Posterior vena cava (tissue), 2 donors: ENCODE measurements at regions of chr1 and their contacts with region 1.

Region 1: GRCh38 chr1:64127297-64127696 is 76.1 kb upstream of the UBE2U start:
- DNase-seq: no peak

Region 2: GRCh38 chr1:64087768-64088167 is 39.5 kb before region 1 on chr1:
- intact Hi-C with region 1: loop called in 1 of 2 experiments (anchors 1 kb)
- DNase-seq: no peak

Region 3: DNA sequence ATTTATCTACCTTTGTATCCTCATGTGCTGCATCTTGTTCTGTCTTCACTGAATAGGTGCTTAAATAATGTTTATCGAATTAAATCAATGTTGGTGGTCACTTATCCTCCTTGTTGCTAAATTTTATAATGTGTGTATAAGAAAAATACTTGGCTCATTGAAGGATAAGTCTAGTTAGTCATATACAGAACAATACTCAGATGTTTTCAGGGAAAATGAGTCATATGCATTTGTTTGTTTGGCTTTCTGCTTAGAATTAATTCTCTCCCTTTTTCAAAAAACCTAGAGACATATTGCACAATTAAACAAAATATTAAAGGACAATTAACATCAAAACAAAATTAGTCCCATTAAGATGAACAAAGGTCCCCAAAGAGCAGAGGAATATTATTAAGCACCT is 165.1 kb after region 1 on chr1:
- intact Hi-C with region 1: no loop called
- DNase-seq: no peak

Region 4: DNA sequence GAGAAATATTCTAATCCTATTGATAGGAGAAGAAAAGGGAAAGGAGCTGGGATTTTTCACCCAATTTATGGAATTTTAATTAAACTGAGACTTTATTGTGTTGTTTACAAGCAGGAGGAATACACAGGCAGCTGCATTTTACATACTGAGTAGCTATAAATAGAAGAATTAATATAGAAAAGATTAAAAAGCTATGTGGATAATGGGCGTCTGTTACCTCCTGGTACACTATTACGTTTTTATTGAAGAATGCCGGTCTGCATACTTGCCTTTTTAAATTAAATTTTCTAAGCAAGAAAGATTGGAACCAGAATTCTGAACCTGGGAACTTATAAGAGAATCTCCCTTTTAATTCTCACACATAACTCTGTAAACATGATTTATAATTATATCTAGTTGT is 290.5 kb after region 1 on chr1:
- intact Hi-C with region 1: no loop called
- DNase-seq: no peak